ENCODE measurements at regions of chr15 and their contacts with region 1.

Region 1: GRCh38 chr15:65318870-65319356 is 14.4 kb downstream of the RNU5B-1 start:
- DNase-seq: peak; percentile 91
- H3K4me3 Mint-ChIP-seq: no peak overlapping the region
- H3K27ac Mint-ChIP-seq: no peak overlapping the region
- H3K4me1 Mint-ChIP-seq: no peaks in the 10 kb centered on the region
- H3K27me3 Mint-ChIP-seq: no peaks in the 10 kb centered on the region

Region 2: DNA sequence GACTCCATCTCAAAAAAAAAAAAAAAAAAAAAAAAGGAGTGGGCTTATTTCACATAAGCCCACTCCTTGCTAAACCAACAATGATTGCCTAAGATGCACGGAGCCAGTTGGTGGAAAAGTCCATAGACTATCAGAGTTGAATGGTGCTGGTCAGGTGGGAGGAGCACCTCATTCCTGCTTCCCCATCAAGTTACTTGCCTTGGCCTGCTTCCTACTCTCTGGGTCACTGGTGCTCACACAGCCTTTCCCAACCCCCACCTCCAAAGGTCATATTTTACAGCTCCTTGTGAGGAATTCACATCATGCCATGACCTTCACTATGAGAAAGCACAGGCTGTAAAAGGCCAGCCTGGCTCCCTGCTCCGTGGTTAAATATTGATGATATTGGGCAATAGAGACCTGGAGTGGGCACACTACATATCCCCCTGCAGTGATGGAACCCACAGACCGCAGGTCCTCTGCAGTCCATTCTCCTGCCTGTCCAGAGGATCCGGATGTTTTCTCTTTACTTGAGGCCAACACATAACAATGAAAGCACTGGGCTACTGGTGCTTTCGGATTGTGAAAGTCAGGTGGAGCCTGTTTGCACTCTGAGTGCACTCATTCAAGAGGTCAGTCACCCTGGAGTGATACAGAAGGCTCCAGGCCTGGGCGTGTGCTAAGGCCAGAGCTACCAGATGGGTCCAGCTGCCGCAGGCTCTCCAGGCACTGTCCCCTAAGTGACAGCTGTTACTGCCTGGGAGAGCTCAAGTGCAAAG is 274.0 kb before region 1 on chr15 and contains the start of gene SLC51B:
- CTCF ChIA-PET with region 1: no interaction called
- intact Hi-C with region 1: no loop called
- DNase-seq: no peak
- H3K4me3 Mint-ChIP-seq: no peak within 1 kb of the TSS
- H3K27ac Mint-ChIP-seq: no peak within 1 kb of the TSS
- H3K4me1 Mint-ChIP-seq: peaks cover 12% of the 10 kb centered on the region
- H3K27me3 Mint-ChIP-seq: no peaks in the 10 kb centered on the region
- total RNA-seq, gene SLC51B: not detected

Region 3: GRCh38 chr15:65304389-65305144 is 14.3 kb before region 1 on chr15 and contains the start of gene RNU5B-1:
- CTCF ChIA-PET with region 1: interaction called, 14 read pairs
- intact Hi-C with region 1: no loop called
- DNase-seq: peak; percentile 86
- H3K4me3 Mint-ChIP-seq: peak within 1 kb of the TSS; percentile 89
- H3K27ac Mint-ChIP-seq: peak within 1 kb of the TSS; percentile 97
- H3K4me1 Mint-ChIP-seq: peaks cover 24% of the 10 kb centered on the region
- H3K27me3 Mint-ChIP-seq: peaks cover 4% of the 10 kb centered on the region
- total RNA-seq, gene RNU5B-1: not detected

Region 4: DNA sequence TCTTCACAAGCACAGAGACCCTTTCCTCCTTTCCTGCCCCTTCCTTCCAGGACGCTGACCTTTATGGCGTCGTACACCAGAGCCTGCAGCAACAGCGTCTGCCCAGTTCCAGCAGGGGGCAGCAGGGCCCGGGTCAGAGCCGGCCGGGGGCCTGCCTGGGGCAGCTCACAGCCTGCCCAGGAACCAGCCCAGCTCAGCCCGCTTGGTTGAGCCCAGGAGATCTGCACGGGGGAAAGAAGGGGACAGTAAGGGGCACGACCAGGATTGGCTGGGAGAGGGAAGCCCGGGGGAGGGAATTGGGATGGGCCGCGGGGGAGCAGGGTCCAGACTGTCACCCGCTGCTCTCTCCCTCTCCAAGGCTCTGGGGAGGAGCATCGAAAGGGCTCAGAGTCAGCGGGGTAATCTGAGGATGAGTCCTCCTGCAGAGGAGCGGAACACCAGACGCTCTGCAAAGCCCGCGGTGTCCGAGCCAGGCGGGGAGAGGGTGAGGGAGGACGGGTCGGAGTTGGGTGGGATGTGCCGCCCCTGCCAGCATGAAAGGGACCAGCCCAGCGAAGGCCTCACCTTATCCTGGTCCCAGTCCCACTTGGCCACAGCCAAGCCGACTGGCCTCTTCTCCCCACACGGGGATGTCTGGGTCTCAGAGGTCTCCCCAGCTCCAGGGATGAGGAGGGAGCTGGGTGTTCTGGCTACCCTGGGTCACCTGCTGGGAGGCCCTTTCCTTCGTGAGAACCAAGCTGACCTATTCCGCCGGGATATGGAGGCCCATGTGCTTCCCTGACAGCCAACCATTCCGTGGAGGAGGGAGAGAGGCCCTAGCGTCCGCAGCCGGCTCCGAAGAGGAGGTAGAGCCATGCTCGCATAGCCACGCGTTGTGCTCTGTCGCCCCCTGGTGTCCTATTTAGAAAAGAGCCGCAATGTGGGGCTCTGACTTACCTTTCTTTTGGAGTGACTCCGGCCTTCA is 66.3 kb after region 1 on chr15:
- CTCF ChIA-PET with region 1: interaction called, 96 read pairs
- intact Hi-C with region 1: loop called (anchors 1 kb)
- DNase-seq: peak; percentile 92
- H3K4me3 Mint-ChIP-seq: peak overlapping the region; percentile 83
- H3K27ac Mint-ChIP-seq: peak overlapping the region; percentile 46
- H3K4me1 Mint-ChIP-seq: peaks cover 11% of the 10 kb centered on the region
- H3K27me3 Mint-ChIP-seq: peaks cover 9% of the 10 kb centered on the region

Region 5: GRCh38 chr15:65400760-65401610 is 82.1 kb after region 1 on chr15:
- CTCF ChIA-PET with region 1: interaction called, 10 read pairs
- intact Hi-C with region 1: loop called (anchors 5 kb)
- DNase-seq: peak; percentile 68
- H3K4me3 Mint-ChIP-seq: no peak overlapping the region
- H3K27ac Mint-ChIP-seq: no peak overlapping the region
- H3K4me1 Mint-ChIP-seq: peaks cover 6% of the 10 kb centered on the region
- H3K27me3 Mint-ChIP-seq: peaks cover 31% of the 10 kb centered on the region